ENCODE measurements at regions of chr22 and their contacts with region 1.

Region 1: DNA sequence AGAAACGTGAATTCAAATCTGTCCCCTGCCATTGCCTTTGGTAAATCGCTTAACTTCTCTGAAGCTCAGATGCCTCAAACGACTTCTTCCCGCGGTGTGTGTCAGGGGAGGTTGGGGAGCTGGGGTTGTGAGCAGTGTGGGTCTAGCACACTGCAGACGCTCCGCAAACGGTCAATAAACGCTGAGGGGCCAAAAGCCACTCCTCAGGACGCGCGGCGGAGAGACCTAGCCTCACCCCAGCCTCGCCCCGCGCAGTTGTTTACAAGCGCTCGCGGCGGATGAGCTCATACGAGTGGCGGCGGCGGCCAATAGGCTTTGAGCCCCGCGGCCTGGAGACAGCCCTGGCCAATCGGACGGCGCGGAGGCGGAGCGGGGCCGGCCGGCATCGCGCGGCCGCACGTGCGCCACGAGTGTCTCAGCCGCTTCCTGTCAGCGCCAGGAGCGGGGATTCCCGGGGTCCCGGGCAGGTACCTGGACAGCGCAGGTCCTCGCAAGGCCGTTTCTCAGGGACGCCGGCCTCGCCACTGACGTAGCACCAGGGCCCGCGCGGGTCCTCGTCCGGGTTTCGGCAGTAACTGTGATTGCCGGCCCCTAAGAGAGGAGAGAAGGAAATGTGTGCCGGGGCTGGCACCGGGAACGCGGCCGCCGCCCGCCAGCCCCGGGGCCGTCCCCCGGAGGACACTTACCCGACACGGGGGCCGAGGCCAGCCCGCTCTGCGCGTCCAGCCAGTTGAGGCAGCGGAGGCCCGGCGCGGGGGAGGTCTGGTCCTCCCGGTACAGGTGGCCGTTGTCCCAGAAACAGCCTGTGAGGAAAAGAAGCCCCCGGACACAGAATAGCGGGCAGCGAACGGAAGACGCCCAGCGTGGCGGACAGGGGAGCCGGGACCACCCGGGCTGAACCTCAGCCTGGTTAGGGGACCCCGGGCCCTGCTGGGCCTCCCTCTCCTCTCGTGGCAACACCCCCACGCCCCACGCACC is 1.5 kb downstream of the PIK3IP1 start:
- DNase-seq: peak; percentile 95 to 98 (median 96)
- H3K4me3 ChIP-seq: peak overlapping the region; percentile 56 to 98 (median 88)
- H3K27ac ChIP-seq: peak overlapping the region; percentile 85 to 100 (median 99)
- H3K27me3 ChIP-seq: no peaks in the 10 kb centered on the region
- CTCF ChIP-seq: peak in 28 of 56 donors; percentile 5 to 57 (median 26)

Region 2: DNA sequence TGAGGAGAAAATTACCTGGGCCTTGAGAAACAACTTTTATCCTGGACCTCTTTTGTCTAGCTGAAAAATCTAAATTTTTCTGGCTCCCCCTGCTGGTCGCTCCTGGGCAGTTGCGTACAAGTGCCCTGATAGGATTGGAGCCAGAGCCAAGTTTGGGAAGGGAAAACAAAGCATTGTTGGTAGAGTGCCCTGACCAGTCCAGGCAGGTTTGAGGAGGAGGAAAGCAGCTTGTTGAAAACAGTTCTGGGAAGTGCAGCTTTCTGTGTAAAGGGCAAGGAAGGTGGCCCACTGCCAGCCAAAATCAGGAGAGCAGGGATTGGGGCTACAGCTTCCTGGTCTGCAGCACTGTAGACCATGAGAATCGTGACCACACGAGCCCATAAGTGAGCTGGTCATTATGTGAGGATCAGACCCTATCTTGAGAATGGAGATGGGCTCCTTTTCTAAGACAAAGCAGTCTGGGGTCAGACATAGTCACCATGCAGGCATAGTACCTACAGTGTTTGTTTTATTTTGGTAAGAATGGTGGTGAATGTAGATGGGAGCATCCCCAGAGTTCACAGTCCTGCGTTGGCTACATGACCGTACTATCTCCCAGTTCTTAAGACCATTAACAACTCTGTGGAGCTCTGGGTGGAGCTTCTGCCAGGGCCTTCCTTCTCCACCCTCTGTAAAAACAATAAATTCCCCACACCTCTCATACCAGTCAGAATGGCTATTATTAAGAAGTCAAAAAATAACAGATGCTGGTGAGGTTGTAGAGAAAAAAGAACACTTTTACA is 22.8 kb after region 1 on chr22:
- intact Hi-C with region 1: loop called in 1 of 2 experiments (anchors 1 kb)
- DNase-seq: peak in 7 of 10 donors; percentile 63 to 77 (median 69)
- H3K4me3 ChIP-seq: no peak overlapping the region
- H3K27ac ChIP-seq: peak overlapping the region in 35 of 59 donors; percentile 9 to 85 (median 54)
- H3K27me3 ChIP-seq: no peaks in the 10 kb centered on the region
- CTCF ChIP-seq: peak; percentile 65 to 94 (median 86)

Region 3: GRCh38 chr22:31345331-31346254 is 54.8 kb after region 1 on chr22:
- intact Hi-C with region 1: loop called (anchors 2 kb)
- DNase-seq: peak; percentile 58 to 86 (median 79)
- H3K4me3 ChIP-seq: peak overlapping the region; percentile 54 to 93 (median 79)
- H3K27ac ChIP-seq: peak overlapping the region; percentile 14 to 98 (median 94)
- H3K27me3 ChIP-seq: no peaks in the 10 kb centered on the region
- CTCF ChIP-seq: peak; percentile 25 to 95 (median 74)

Region 4: GRCh38 chr22:31399211-31400028 is 108.6 kb after region 1 on chr22 and contains the start of gene DRG1:
- intact Hi-C with region 1: loop called in 1 of 2 experiments (anchors 2 kb)
- DNase-seq: peak; percentile 96 to 99 (median 97)
- H3K4me3 ChIP-seq: peak within 1 kb of the TSS; percentile 67 to 100 (median 94)
- H3K27ac ChIP-seq: peak within 1 kb of the TSS; percentile 54 to 98 (median 90)
- H3K27me3 ChIP-seq: no peaks in the 10 kb centered on the region
- CTCF ChIP-seq: peak in 46 of 56 donors; percentile 19 to 69 (median 49)
- total RNA-seq, gene DRG1: 27.5 to 88.4 (median 56.9) TPM

Region 5: GRCh38 chr22:31451709-31452571 is 161.2 kb after region 1 on chr22:
- intact Hi-C with region 1: no loop called
- DNase-seq: no peak
- H3K4me3 ChIP-seq: no peak overlapping the region
- H3K27ac ChIP-seq: peak overlapping the region in 1 of 59 donors; percentile 13
- H3K27me3 ChIP-seq: no peaks in the 10 kb centered on the region
- CTCF ChIP-seq: peak in 25 of 56 donors; percentile 10 to 42 (median 19)

Measured in dorsolateral prefrontal cortex (tissue), 120 donors.